PC-3 (cell line): ENCODE measurements at regions of chr13 and their contacts with region 1.

Region 1: GRCh38 chr13:60431108-60431700 is 34.2 kb downstream of the TDRD3 start:
- DNase-seq: peak; percentile 61
- ATAC-seq: peak; percentile 73
- H3K4me3 ChIP-seq: no peak overlapping the region
- H3K27ac ChIP-seq: no peak overlapping the region
- H3K4me1 ChIP-seq: no peaks in the 10 kb centered on the region
- H3K27me3 ChIP-seq: no peaks in the 10 kb centered on the region
- CTCF ChIP-seq: peak; percentile 77

Region 2: GRCh38 chr13:59771272-59771671 is 659.9 kb before region 1 on chr13:
- CTCF ChIA-PET with region 1: no interaction called
- POLR2A ChIA-PET with region 1: no interaction called
- intact Hi-C with region 1: loop called (anchors 10 kb)
- DNase-seq: peak; percentile 38
- ATAC-seq: no peak; the same call in 1 of the 2 replicates
- H3K4me3 ChIP-seq: no peak overlapping the region
- H3K27ac ChIP-seq: no peak overlapping the region
- H3K4me1 ChIP-seq: peaks cover 10% of the 10 kb centered on the region
- H3K27me3 ChIP-seq: no peaks in the 10 kb centered on the region
- CTCF ChIP-seq: peak; percentile 69

Region 3: GRCh38 chr13:59906413-59907049 is 524.7 kb before region 1 on chr13:
- CTCF ChIA-PET with region 1: no interaction called
- POLR2A ChIA-PET with region 1: no interaction called
- intact Hi-C with region 1: loop called (anchors 1 kb)
- DNase-seq: peak; percentile 41
- ATAC-seq: peak; percentile 49; the same call in 1 of the 2 replicates
- H3K4me3 ChIP-seq: no peak overlapping the region
- H3K27ac ChIP-seq: no peak overlapping the region
- H3K4me1 ChIP-seq: no peaks in the 10 kb centered on the region
- H3K27me3 ChIP-seq: no peaks in the 10 kb centered on the region
- CTCF ChIP-seq: peak; percentile 72

Region 4: GRCh38 chr13:60226507-60226906 is 204.7 kb before region 1 on chr13:
- CTCF ChIA-PET with region 1: interaction called, 4 read pairs
- POLR2A ChIA-PET with region 1: no interaction called
- intact Hi-C with region 1: loop called (anchors 10 kb)
- DNase-seq: peak; percentile 30
- ATAC-seq: peak; percentile 84
- H3K4me3 ChIP-seq: no peak overlapping the region
- H3K27ac ChIP-seq: no peak overlapping the region
- H3K4me1 ChIP-seq: no peaks in the 10 kb centered on the region
- H3K27me3 ChIP-seq: peaks cover 20% of the 10 kb centered on the region; the same call in 1 of the 2 replicates
- CTCF ChIP-seq: peak; percentile 53

Region 5: GRCh38 chr13:60335531-60335930 is 95.7 kb before region 1 on chr13:
- CTCF ChIA-PET with region 1: interaction called, 4 read pairs
- POLR2A ChIA-PET with region 1: no interaction called
- intact Hi-C with region 1: loop called (anchors 2 kb)
- DNase-seq: peak; percentile 16
- ATAC-seq: no peak
- H3K4me3 ChIP-seq: no peak overlapping the region
- H3K27ac ChIP-seq: no peak overlapping the region
- H3K4me1 ChIP-seq: no peaks in the 10 kb centered on the region
- H3K27me3 ChIP-seq: peaks cover 25% of the 10 kb centered on the region; the same call in 1 of the 2 replicates
- CTCF ChIP-seq: peak; percentile 60

Region 6: DNA sequence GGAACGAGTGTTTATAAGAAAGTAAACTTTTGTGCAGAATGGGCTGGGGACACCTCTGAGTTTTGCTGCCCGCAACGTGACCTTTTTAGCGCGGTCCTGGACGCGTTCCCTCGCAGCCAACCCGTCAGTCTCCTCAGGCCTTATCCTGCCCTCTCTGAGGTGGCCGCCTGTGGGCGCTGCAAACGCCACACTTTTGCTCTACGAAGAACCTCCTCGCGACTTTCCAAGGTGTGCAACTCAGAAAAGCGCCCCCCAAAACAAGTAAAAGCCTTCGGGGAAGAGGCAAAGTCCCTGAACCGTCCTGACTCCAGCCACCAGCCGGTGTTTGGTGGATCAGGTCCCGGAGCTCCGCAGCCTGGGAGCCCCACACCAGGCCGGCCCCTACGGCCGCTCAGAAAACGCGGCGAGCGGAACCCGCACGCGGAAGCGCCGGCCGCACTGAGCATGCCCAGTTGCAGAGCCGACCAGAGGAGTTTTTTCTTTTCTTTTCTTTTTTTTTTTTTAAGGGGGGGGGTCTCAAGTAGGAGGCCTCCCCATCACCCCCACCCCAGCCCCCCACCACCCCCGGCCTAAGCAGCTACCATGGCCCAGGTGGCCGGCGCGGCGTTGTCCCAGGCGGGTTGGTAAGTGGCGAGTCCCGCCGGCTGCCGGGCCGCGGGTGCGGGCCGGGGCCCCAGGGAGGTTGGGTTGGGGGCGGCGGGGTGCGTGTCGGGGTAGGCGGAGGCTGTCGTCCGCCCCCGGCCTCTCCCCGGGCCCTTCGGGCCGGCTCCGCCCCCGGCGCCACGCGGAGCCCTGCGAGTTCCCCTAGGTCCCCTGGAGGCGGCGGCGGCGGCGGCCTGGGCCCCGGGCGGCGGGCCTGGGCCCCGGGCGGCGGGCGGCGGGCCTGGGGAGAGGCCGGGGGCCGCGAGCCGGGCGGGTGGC is 34.2 kb before region 1 on chr13 and contains the start of gene TDRD3:
- CTCF ChIA-PET with region 1: interaction called, 3 read pairs
- POLR2A ChIA-PET with region 1: no interaction called
- intact Hi-C with region 1: loop called (anchors 1 kb)
- DNase-seq: peak; percentile 73
- ATAC-seq: peak; percentile 64
- H3K4me3 ChIP-seq: peak within 1 kb of the TSS; percentile 89
- H3K27ac ChIP-seq: peak within 1 kb of the TSS; percentile 73
- H3K4me1 ChIP-seq: peaks cover 20% of the 10 kb centered on the region
- H3K27me3 ChIP-seq: no peaks in the 10 kb centered on the region
- CTCF ChIP-seq: peak; percentile 69
- total RNA-seq, gene TDRD3: 5.8 and 7.5 TPM in 2 replicates